WTC11 (cell line): ENCODE measurements at regions of chr2 and their contacts with region 1.

Region 1: GRCh38 chr2:186862869-186863709 is 14.1 kb upstream of the ZSWIM2 start:
- DNase-seq: no peak
- ATAC-seq: peak; percentile 55; the same call in 1 of the 2 replicates
- H3K4me3 Mint-ChIP-seq: no peak overlapping the region
- H3K27ac Mint-ChIP-seq: no peak overlapping the region
- H3K4me1 Mint-ChIP-seq: no peaks in the 10 kb centered on the region
- H3K27me3 Mint-ChIP-seq: 0 out of 2 replicates have a peak, but pooled peaks cover 3% of the 10 kb centered on the region
- CTCF ChIP-seq: no peak; the same call in 1 of the 2 replicates

Region 2: GRCh38 chr2:186882511-186883071 is 19.5 kb after region 1 on chr2:
- CTCF ChIA-PET with region 1: interaction called, 12 read pairs
- POLR2A ChIA-PET with region 1: no interaction called
- DNase-seq: no peak
- ATAC-seq: peak; percentile 50; the same call in 1 of the 2 replicates
- H3K4me3 Mint-ChIP-seq: no peak overlapping the region
- H3K27ac Mint-ChIP-seq: no peak overlapping the region
- H3K4me1 Mint-ChIP-seq: no peaks in the 10 kb centered on the region
- H3K27me3 Mint-ChIP-seq: no peaks in the 10 kb centered on the region
- CTCF ChIP-seq: no peak

Region 3: DNA sequence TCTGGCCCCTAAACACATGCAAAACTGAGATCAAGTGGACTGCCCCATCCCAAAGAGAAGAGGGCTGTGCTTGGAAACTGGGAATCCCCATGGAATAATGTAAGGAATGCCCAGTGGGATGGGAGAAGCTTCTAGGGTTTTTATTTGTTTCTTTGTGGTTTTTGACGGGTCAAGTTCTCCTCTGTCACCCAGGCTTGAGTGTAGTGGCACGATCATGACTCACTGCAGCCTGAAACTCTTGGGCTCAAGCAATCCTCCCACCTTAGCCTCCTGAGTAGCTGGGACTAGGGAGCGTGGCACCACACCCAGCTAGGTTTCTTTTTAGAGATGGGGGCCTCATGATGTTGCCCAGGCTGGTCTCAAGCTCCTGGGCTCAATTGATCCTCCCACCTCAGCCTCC is 87.6 kb after region 1 on chr2:
- CTCF ChIA-PET with region 1: no interaction called
- POLR2A ChIA-PET with region 1: no interaction called
- DNase-seq: no peak
- ATAC-seq: no peak
- H3K4me3 Mint-ChIP-seq: no peak overlapping the region
- H3K27ac Mint-ChIP-seq: no peak overlapping the region
- H3K4me1 Mint-ChIP-seq: no peaks in the 10 kb centered on the region
- H3K27me3 Mint-ChIP-seq: no peaks in the 10 kb centered on the region
- CTCF ChIP-seq: no peak

Region 4: DNA sequence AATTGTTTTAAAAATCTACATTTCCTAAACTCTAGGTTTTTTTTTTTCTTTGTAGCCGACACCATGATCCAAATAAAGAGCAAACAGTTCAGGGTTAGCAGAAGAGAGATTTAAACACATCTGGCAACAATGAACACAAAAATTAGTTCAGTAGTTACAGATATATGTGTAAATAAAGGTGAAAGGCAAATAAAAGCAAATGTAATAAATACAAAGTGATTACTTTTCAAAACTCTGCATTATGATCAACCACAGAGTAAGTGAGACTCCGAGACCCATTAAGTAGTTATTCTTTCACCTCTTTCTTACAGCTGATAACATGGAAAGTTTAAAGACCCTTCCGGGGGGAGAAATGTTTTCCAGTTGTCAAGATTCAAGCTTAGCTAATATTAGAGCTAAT is 584.2 kb after region 1 on chr2:
- CTCF ChIA-PET with region 1: interaction called, 19 read pairs
- POLR2A ChIA-PET with region 1: no interaction called
- DNase-seq: no peak
- ATAC-seq: no peak
- H3K4me3 Mint-ChIP-seq: 0 out of 2 replicates have a peak overlapping the region, but pooled peaks have one; percentile 11
- H3K27ac Mint-ChIP-seq: no peak overlapping the region
- H3K4me1 Mint-ChIP-seq: peaks cover 13% of the 10 kb centered on the region
- H3K27me3 Mint-ChIP-seq: no peaks in the 10 kb centered on the region
- CTCF ChIP-seq: no peak

Region 5: GRCh38 chr2:187453078-187453641 is 590.1 kb after region 1 on chr2:
- CTCF ChIA-PET with region 1: interaction called, 19 read pairs
- POLR2A ChIA-PET with region 1: no interaction called
- DNase-seq: no peak
- ATAC-seq: no peak
- H3K4me3 Mint-ChIP-seq: no peak overlapping the region
- H3K27ac Mint-ChIP-seq: no peak overlapping the region
- H3K4me1 Mint-ChIP-seq: peaks cover 6% of the 10 kb centered on the region
- H3K27me3 Mint-ChIP-seq: no peaks in the 10 kb centered on the region
- CTCF ChIP-seq: peak; percentile 31; the same call in 1 of the 2 replicates